ENCODE measurements at regions of chr5 and their contacts with region 1.

Region 1: GRCh38 chr5:13987843-13988464 is 43.5 kb upstream of the DNAH5 start:
- DNase-seq: peak; percentile 44
- H3K4me3 ChIP-seq: no peak overlapping the region
- H3K27ac ChIP-seq: no peak overlapping the region
- H3K4me1 ChIP-seq: no peaks in the 10 kb centered on the region
- CTCF ChIP-seq: peak; percentile 91

Region 2: GRCh38 chr5:14081791-14082190 is 93.8 kb after region 1 on chr5:
- CTCF ChIA-PET with region 1: no interaction called
- POLR2A ChIA-PET with region 1: no interaction called
- intact Hi-C with region 1: loop called (anchors 10 kb)
- DNase-seq: no peak
- H3K4me3 ChIP-seq: no peak overlapping the region
- H3K27ac ChIP-seq: no peak overlapping the region
- H3K4me1 ChIP-seq: peaks cover 9% of the 10 kb centered on the region
- CTCF ChIP-seq: no peak

Region 3: DNA sequence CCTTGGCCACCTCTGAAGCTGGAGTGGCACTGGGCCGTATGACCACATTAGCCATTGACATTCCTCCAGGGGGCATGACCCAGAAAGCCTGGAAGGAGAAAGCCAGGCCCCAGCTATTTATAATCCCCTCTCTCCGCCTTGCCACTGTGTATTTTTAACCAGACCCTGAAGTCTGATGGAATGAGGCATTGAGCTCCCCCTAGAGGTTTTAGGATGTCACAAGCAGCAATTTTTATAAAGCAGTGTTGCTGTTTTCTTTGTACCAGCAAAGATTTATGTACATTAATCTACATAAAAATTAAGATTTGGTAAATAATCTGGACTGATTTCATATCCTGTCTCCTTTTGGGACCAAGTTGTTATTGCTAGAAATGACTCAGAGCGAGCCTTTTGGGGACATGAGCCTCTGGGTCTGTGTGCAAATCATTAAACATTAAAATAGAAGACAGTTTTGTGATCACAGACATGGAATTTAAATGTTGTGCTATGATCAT is 282.3 kb after region 1 on chr5:
- CTCF ChIA-PET with region 1: no interaction called
- POLR2A ChIA-PET with region 1: no interaction called
- intact Hi-C with region 1: loop called (anchors 2 kb)
- DNase-seq: peak; percentile 70
- H3K4me3 ChIP-seq: no peak overlapping the region
- H3K27ac ChIP-seq: no peak overlapping the region
- H3K4me1 ChIP-seq: peaks cover 17% of the 10 kb centered on the region
- CTCF ChIP-seq: peak; percentile 90

Region 4: DNA sequence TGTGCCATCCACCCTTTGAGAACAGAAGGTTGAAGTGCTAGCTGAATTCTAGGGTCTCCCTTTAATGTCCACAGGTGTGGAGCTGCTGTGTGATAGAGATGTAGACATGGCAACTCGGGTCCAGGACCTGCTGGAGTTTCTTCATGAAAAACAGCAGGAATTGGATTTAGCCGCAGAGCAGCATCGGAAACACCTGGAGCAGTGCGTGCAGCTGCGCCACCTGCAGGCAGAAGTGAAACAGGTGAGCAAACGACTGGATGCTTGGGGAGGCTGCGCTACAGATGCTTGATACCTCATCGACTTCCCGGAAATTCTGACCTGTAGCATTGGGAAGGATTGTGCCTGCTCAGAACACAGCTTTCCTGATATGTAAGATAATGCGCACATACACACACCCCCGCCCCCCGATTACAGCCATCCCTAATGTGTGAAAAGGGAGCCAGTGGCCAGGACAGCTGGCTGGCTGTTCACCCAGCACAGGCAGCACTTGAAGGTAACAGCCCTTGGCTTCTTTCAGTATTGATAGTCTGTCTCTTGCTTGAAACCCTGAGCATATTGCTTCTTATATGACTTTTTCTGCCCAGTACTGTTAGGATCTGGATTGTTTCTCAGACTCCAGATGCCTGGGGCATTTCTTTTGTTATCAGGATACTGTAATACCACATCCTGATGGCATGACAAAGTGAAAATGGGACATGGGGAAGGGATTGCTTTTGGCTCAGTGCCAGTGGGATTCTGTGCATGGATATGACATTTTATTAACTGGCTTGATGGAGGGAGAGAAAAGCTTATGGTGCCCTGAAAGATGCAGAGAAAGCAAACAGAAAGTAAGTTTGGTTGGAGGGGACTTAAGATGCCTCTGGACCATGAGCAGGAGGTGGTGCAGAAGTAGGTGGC is 376.9 kb after region 1 on chr5:
- CTCF ChIA-PET with region 1: no interaction called
- POLR2A ChIA-PET with region 1: no interaction called
- intact Hi-C with region 1: loop called (anchors 5 kb)
- DNase-seq: peak; percentile 60
- H3K4me3 ChIP-seq: no peak overlapping the region
- H3K27ac ChIP-seq: no peak overlapping the region
- H3K4me1 ChIP-seq: peaks cover 4% of the 10 kb centered on the region
- CTCF ChIP-seq: peak; percentile 86

Region 5: DNA sequence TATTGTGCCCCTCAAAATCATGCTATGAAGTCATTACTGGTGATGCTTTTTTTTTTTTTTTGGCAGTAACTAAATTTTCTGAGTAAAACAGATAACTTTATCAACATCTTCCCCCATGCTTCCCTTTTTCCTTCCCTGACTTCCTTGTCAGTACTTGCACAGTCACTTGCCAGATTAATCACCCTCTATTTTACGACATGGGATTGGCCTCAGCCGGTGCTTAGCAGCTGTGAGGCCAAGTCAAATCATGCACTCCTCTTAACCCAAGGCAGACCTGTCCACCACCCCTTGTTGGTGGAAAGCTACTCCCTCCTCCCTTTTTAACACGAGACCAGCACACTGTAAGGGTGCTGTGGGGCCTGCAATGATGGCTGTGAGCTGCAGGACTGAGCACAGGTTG is 475.7 kb after region 1 on chr5:
- CTCF ChIA-PET with region 1: no interaction called
- POLR2A ChIA-PET with region 1: no interaction called
- intact Hi-C with region 1: no loop called
- DNase-seq: no peak
- H3K4me3 ChIP-seq: no peak overlapping the region
- H3K27ac ChIP-seq: no peak overlapping the region
- H3K4me1 ChIP-seq: no peaks in the 10 kb centered on the region
- CTCF ChIP-seq: no peak

Region 6: DNA sequence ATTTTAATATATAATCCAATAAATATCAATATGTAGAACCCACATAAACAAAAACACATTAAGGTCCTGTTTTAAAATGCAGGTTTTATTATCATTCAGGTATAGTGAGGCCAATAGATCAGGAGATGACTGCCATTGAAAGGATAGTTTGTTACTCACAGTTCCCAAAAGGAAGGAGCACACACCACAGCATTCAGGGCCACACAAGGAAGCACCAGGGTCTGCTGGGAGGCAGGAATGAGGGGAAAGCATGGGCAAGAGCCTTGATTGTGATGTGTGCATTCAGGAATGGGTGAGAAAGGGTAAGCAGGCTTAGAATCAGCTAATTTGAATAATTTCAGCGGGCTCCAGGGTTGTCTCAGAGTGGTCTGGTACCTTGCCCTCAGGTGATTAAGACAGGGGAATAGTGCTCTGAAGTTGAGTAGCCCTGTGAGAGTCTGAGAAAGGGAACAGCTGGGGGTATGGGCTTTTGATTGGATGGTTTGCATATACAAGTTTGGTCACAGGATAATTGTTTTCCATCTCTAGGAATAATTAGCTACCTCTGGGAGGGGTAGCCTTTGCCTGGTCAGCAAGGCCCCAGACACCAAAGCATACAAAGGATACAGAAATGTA is 656.8 kb after region 1 on chr5:
- CTCF ChIA-PET with region 1: no interaction called
- POLR2A ChIA-PET with region 1: no interaction called
- intact Hi-C with region 1: loop called (anchors 5 kb)
- DNase-seq: no peak
- H3K4me3 ChIP-seq: no peak overlapping the region
- H3K27ac ChIP-seq: no peak overlapping the region
- H3K4me1 ChIP-seq: no peaks in the 10 kb centered on the region
- CTCF ChIP-seq: no peak